ENCODE measurements at regions of chr3 and their contacts with region 1.

Region 1: DNA sequence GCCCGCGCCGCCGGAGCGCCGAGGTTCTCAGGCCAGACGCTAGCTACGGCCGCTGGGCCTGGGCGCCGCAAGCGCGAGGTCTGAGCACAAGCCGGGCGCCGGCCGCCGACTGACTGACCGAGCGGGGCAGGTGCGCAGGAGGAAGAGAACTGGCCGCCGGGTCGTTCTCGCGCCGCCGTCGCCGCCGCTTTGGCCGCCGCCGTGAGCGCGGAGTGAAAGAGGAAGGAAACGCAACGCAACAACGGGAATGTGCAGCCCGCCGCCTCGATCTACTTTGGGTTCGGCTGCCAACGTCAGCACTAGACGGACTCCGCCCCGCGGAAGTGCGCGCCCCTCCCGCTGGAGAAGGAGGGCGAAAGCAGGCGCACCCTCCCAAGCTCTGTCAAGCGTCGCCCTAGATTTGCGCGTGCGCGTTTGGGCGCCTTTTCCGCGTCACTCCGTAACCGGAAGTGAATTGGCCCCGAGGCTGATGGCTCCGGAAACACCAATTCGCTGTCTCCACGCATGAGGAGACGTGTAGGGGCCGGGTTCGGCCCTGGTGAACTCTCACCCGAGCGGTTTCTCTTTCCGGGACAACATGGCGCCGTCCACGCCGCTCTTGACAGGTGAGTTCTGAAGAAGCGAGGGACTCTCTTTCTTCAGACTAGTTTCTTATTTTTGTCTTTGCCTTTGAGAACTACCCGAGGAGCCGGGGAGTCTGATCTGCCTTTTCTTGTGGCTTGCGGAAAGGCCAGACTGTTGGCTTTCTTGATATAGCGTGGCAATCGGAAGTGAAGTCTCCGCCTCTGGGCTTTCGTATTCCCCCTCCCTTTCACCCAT is at the starts of genes EIF2A and SERP1:
- DNase-seq: peak; percentile 98 to 100 (median 99)
- ATAC-seq: peak; percentile 97 to 98 (median 98)
- H3K4me3 ChIP-seq: peak within 1 kb of the TSS; percentile 80 to 98 (median 86)
- H3K27ac ChIP-seq: peak within 1 kb of the TSS; percentile 91 to 99 (median 98)
- H3K4me1 ChIP-seq: peaks cover 0 to 55% (median 28%) of the 10 kb centered on the region in 12 donors
- H3K27me3 ChIP-seq: no peaks in the 10 kb centered on the region
- CTCF ChIP-seq: peak in 2 of 12 donors; percentile 1 to 5
- POLR2A ChIP-seq: peak; percentile 48 to 95
- total RNA-seq, gene EIF2A: 60.5 to 112 (median 75.5) TPM
- total RNA-seq, gene SERP1: 19.5 to 86.9 (median 26.3) TPM

Region 2: GRCh38 chr3:150603153-150603979 is 56.9 kb after region 1 on chr3 and contains the start of gene SELENOT:
- intact Hi-C with region 1: loop called in 5 of 10 experiments (anchors 2 to 10 kb)
- DNase-seq: peak; percentile 94 to 98 (median 96)
- ATAC-seq: peak; percentile 93 to 97 (median 97)
- H3K4me3 ChIP-seq: peak within 1 kb of the TSS; percentile 60 to 96 (median 79)
- H3K27ac ChIP-seq: peak within 1 kb of the TSS; percentile 82 to 99 (median 92)
- H3K4me1 ChIP-seq: peaks cover 0 to 67% (median 38%) of the 10 kb centered on the region in 12 donors
- H3K27me3 ChIP-seq: no peaks in the 10 kb centered on the region
- CTCF ChIP-seq: peak in 11 of 12 donors; percentile 14 to 56 (median 28)
- POLR2A ChIP-seq: peak; percentile 67 to 84
- total RNA-seq, gene SELENOT: 62.7 to 103 (median 80.1) TPM

Region 3: GRCh38 chr3:150703299-150704134 is 157.1 kb after region 1 on chr3 and contains the start of gene ERICH6:
- intact Hi-C with region 1: loop called in 3 of 10 experiments (anchors 1 to 10 kb)
- DNase-seq: peak; percentile 91 to 95 (median 93)
- ATAC-seq: peak; percentile 99
- H3K4me3 ChIP-seq: peak within 1 kb of the TSS; percentile 34 to 83 (median 72)
- H3K27ac ChIP-seq: peak within 1 kb of the TSS; percentile 25 to 90 (median 80)
- H3K4me1 ChIP-seq: peaks cover 0 to 13% (median 7%) of the 10 kb centered on the region in 12 donors
- H3K27me3 ChIP-seq: no peaks in the 10 kb centered on the region
- CTCF ChIP-seq: peak in 7 of 12 donors; percentile 5 to 16 (median 9)
- POLR2A ChIP-seq: peak in 1 of 2 donors; percentile 47
- total RNA-seq, gene ERICH6: 0.32 to 0.54 TPM in 2 of 9 donors, not detected in the others

Region 4: DNA sequence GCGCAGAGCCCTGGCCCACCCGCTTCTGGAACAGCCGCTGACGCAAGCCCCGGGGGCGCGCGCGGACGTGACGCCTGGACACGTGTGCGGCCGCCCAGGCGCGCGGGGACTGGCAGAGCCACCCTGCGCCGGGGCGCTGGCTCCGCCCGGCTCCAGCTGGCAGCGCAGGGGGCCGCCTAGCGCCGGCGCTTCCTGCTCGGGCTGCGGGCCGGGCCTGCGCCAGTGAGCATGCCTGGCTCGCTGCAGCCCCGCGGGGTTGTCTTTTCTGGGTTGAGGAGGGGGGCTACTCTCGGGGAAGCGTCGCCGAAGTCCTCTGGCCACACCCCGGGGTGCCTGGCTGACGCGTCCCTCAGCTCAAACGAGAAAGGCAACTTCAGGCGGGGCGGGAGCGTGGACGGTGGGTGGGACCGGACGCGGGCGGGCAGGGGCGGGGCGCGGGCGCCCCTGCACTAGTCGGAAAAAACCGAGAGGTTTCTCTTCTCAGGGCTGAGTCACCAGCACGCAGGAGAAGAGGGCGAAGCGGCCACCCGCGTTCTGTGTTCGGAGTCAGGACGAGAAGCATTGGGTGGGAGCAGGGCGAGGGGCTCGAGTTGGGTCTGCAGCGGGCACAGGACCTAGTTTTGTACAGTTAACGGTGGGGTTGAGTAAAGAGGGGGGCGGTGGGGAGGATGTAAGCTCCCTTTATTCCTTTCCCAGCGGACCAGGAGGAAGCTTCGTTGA is 216.8 kb after region 1 on chr3 and contains the start of gene SIAH2:
- intact Hi-C with region 1: loop called in 4 of 10 experiments (anchors 2 to 10 kb)
- DNase-seq: peak; percentile 93 to 96 (median 95)
- ATAC-seq: peak; percentile 89 to 95 (median 92)
- H3K4me3 ChIP-seq: peak within 1 kb of the TSS; percentile 48 to 93 (median 83)
- H3K27ac ChIP-seq: peak within 1 kb of the TSS; percentile 87 to 99 (median 96)
- H3K4me1 ChIP-seq: peaks cover 5 to 42% (median 29%) of the 10 kb centered on the region in 12 donors
- H3K27me3 ChIP-seq: no peaks in the 10 kb centered on the region
- CTCF ChIP-seq: peak in 1 of 12 donors; percentile 9
- POLR2A ChIP-seq: peak in 1 of 2 donors; percentile 89
- total RNA-seq, gene SIAH2: 16.9 to 38.7 (median 23.4) TPM

Region 5: GRCh38 chr3:150870396-150870795 is 324.0 kb after region 1 on chr3:
- intact Hi-C with region 1: loop called in 1 of 10 experiments (anchors 10 kb)
- DNase-seq: no peak
- ATAC-seq: peak in 2 of 4 donors; percentile 49 to 73
- H3K4me3 ChIP-seq: no peak overlapping the region
- H3K27ac ChIP-seq: peak overlapping the region in 5 of 12 donors; percentile 27 to 46 (median 42)
- H3K4me1 ChIP-seq: peaks cover 0 to 9% (median 0%) of the 10 kb centered on the region in 12 donors
- H3K27me3 ChIP-seq: no peaks in the 10 kb centered on the region
- CTCF ChIP-seq: no peak
- POLR2A ChIP-seq: no peak